Activated B cell treated with CpG ODN at 0.5 μM for 24 hours (primary cell): ENCODE measurements at regions of chr3 and their contacts with region 1.

Region 1: GRCh38 chr3:114418724-114419543 is 125.1 kb downstream of the TIGIT start:
- DNase-seq: no peak
- ATAC-seq: peak; percentile 75
- H3K4me3 Mint-ChIP-seq: peak overlapping the region; percentile 64
- H3K27ac Mint-ChIP-seq: peak overlapping the region; percentile 83
- H3K4me1 Mint-ChIP-seq: peaks cover 45% of the 10 kb centered on the region
- H3K27me3 Mint-ChIP-seq: no peaks in the 10 kb centered on the region
- CTCF ChIP-seq: peak; percentile 22

Region 2: GRCh38 chr3:113838631-113839209 is 580.2 kb before region 1 on chr3 and contains the start of gene GRAMD1C:
- CTCF ChIA-PET with region 1: interaction called, 8 read pairs
- POLR2A ChIA-PET with region 1: no interaction called
- intact Hi-C with region 1: loop called (anchors 1 kb)
- DNase-seq: peak; percentile 78
- ATAC-seq: peak; percentile 99
- H3K4me3 Mint-ChIP-seq: peak within 1 kb of the TSS; percentile 90
- H3K27ac Mint-ChIP-seq: peak within 1 kb of the TSS; percentile 59
- H3K4me1 Mint-ChIP-seq: peaks cover 22% of the 10 kb centered on the region
- H3K27me3 Mint-ChIP-seq: no peaks in the 10 kb centered on the region
- CTCF ChIP-seq: peak; percentile 59
- total RNA-seq, gene GRAMD1C: 11.4 and 12.2 TPM in 2 replicates

Region 3: DNA sequence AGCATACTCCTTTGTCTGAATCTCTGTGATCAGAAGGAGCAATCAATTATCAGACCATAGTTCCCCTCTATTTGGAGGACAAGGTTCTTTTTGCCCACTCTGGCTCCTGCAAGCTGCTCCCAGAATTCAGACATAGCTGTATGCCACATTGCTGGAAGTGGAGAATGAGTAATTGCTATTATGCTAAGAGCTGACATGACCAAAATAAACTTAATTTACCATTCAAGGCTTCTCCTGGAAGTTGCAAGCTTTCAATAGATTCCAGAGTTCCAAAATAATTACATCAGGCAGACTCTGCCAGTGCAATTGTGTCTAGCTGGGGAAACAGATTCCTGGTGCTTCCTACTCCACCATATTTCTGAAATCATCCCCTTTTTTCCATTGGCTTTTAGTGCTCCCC is 232.4 kb before region 1 on chr3:
- CTCF ChIA-PET with region 1: no interaction called
- POLR2A ChIA-PET with region 1: no interaction called
- intact Hi-C with region 1: no loop called
- DNase-seq: no peak
- ATAC-seq: no peak
- H3K4me3 Mint-ChIP-seq: no peak overlapping the region
- H3K27ac Mint-ChIP-seq: no peak overlapping the region
- H3K4me1 Mint-ChIP-seq: no peaks in the 10 kb centered on the region
- H3K27me3 Mint-ChIP-seq: peaks cover 2% of the 10 kb centered on the region
- CTCF ChIP-seq: no peak

Region 4: DNA sequence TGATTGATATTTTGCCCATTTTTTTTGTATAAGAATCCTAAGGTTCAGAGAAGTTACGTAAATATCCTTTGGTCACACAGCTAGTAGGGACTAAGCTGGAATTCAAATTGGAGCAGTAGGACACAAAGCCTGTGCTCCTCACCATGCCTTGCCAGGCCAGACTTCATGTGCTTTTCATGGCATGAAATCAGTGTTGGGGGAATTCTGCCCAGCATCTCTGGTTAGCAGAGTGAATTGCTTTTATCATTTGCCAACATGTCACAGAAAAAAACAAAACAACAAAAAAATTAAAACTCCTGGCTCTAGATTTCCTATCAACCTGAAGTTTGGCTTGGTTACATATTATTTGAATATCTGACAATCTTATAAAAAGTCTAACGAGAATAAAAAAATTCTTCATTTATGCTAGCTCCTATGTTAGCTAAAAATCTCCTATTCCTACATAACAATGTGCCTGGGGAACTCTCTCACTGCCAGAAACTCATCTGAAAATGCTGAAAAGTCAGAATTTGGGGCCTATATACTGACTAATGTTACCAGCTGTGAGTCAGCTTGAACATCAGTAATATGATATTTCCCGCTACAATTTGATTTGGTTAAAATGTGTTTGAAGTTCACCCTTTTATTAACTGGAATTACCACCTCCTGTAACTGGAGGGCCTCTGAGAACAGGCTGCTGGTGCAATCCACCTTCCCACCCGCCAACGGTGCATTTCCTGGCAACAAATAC is 16.6 kb after region 1 on chr3:
- CTCF ChIA-PET with region 1: interaction called, 20 read pairs
- POLR2A ChIA-PET with region 1: interaction called, 6 read pairs
- intact Hi-C with region 1: no loop called
- DNase-seq: no peak
- ATAC-seq: no peak
- H3K4me3 Mint-ChIP-seq: peak overlapping the region; percentile 8
- H3K27ac Mint-ChIP-seq: peak overlapping the region; percentile 77
- H3K4me1 Mint-ChIP-seq: peaks cover 62% of the 10 kb centered on the region
- H3K27me3 Mint-ChIP-seq: no peaks in the 10 kb centered on the region
- CTCF ChIP-seq: no peak

Region 5: GRCh38 chr3:114454551-114455251 is 35.8 kb after region 1 on chr3:
- CTCF ChIA-PET with region 1: interaction called, 9 read pairs
- POLR2A ChIA-PET with region 1: interaction called, 26 read pairs
- intact Hi-C with region 1: no loop called
- DNase-seq: no peak
- ATAC-seq: peak; percentile 43
- H3K4me3 Mint-ChIP-seq: no peak overlapping the region
- H3K27ac Mint-ChIP-seq: no peak overlapping the region
- H3K4me1 Mint-ChIP-seq: peaks cover 52% of the 10 kb centered on the region
- H3K27me3 Mint-ChIP-seq: no peaks in the 10 kb centered on the region
- CTCF ChIP-seq: no peak

Region 6: DNA sequence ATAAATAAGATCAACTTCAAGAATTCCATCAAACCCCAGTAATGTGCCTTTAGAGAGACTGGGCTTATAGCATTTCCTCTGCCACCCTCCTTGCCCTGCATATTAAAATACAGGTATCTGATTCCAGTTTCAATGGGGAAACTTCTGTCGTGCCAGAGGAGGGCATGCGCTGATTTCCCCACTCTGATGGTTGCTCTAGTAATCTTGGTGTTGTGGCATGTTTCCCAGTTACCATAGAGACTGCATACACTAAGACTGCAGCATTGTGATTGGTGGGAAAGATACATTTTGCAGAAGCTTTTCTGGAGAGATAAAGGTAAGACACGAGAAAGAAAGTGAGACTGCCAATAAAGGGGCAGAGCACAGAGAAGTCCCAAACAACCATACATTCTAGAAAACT is 100.5 kb after region 1 on chr3:
- CTCF ChIA-PET with region 1: no interaction called
- POLR2A ChIA-PET with region 1: no interaction called
- intact Hi-C with region 1: loop called (anchors 1 kb)
- DNase-seq: peak; percentile 21
- ATAC-seq: peak; percentile 97
- H3K4me3 Mint-ChIP-seq: no peak overlapping the region
- H3K27ac Mint-ChIP-seq: no peak overlapping the region
- H3K4me1 Mint-ChIP-seq: no peaks in the 10 kb centered on the region
- H3K27me3 Mint-ChIP-seq: no peaks in the 10 kb centered on the region
- CTCF ChIP-seq: no peak

Region 7: GRCh38 chr3:115804722-115805121 is 1385.8 kb after region 1 on chr3:
- CTCF ChIA-PET with region 1: no interaction called
- POLR2A ChIA-PET with region 1: no interaction called
- intact Hi-C with region 1: no loop called
- DNase-seq: no peak
- ATAC-seq: no peak
- H3K4me3 Mint-ChIP-seq: no peak overlapping the region
- H3K27ac Mint-ChIP-seq: no peak overlapping the region
- H3K4me1 Mint-ChIP-seq: no peaks in the 10 kb centered on the region
- H3K27me3 Mint-ChIP-seq: peaks cover 31% of the 10 kb centered on the region
- CTCF ChIP-seq: no peak